Common myeloid progenitor, CD34-positive (primary cell): ENCODE measurements at regions of chr5 and their contacts with region 1.

Region 1: DNA sequence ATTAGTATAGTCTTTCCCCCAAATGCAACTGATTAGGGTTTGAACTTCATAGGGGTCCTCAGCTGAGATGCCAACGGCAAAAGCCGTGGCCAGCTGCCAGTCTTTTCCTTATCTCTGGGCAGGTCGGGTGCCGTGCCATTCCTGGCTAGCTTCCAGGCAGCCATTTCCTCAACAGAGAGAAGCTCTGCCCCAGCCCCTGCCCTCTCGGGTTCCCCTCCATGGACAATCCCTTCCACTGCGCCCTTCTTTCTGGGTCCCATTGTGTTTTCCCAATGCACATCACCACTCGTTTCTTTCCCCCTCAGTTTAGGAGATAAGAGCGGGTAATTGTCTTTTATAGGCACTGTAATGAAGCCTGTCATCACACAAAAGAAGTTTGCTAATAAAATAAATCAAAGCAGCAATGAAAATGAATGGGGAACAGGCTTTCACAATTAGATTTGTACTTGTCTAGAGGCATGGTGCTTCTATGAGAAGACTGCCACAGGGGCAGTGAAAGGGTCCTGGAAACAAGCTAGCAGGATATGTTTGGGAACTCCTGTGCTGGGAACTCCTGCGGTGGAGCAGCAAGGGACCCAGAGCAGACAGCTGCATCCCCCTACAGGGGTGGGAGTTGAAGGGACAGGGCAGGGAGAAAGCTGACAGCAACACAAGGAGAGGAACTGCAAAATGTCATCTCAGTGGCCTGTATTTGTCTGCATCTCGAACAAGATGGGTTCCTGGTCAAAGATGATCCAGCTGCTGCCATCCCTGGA is 48.0 kb upstream of the SAP30L start:
- DNase-seq: peak; percentile 65 to 83 (median 79)
- H3K4me3 ChIP-seq: peak overlapping the region in 1 of 7 experiments; percentile 47
- H3K27ac ChIP-seq: no peak overlapping the region
- H3K4me1 ChIP-seq: peaks cover 0 to 8% (median 3%) of the 10 kb centered on the region in 4 experiments
- H3K27me3 ChIP-seq: no peaks in the 10 kb centered on the region

Region 2: GRCh38 chr5:154384480-154385235 is 13.2 kb before region 1 on chr5:
- CTCF ChIA-PET with region 1: interaction called, 10 read pairs
- POLR2A ChIA-PET with region 1: no interaction called
- DNase-seq: peak; percentile 36 to 81 (median 67)
- H3K4me3 ChIP-seq: peak overlapping the region in 1 of 7 experiments; percentile 6
- H3K27ac ChIP-seq: no peak overlapping the region
- H3K4me1 ChIP-seq: peaks cover 4 to 20% (median 13%) of the 10 kb centered on the region in 4 experiments
- H3K27me3 ChIP-seq: no peaks in the 10 kb centered on the region